Astrocyte of the cerebellum (primary cell): ENCODE measurements at regions of chr1 and their contacts with region 1.

Region 1: DNA sequence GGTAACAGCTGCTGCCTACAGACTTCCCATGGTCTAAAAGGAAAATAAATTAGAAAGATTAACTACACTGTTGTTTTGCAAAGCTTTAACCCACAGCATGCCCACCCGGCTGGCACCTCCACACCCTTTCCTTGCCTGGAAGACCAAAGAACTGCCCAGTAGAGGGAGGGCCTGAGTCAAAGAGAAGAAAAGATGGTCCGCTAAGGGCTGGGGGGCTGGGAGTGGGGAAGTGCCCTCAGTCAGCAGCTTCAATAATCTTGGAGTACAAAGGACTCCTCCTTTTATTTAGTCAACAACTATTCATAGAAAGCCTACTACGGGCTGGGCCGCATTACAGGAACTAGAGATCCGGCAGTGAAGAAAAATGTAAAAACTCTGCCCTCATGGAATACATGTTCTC is 40.6 kb downstream of the ERI3 start:
- DNase-seq: no peak
- H3K4me3 ChIP-seq: no peak overlapping the region
- CTCF ChIP-seq: peak; percentile 37

Region 2: DNA sequence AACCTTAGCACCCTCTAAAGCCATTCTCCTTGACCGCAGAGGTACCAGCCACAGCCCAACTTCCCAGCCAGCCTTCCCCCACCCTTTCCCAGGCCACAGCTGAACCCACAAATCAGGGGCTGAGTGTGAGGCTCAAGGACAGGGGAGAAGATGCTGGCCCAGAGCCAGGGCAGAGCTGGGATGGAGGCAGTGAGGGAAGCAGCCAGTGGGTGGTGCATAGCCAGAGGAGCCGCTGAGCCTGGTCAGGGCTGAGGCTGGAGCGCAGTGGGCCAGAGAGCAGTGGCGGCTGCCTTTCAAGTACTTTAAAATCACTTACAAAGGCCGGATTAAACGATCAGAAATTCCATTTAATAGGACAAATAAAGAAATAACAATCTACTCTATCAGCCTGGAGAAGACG is 64.9 kb before region 1 on chr1:
- in situ Hi-C with region 1: no loop called
- DNase-seq: no peak
- H3K4me3 ChIP-seq: no peak overlapping the region
- CTCF ChIP-seq: no peak

Region 3: GRCh38 chr1:44267438-44267837 is 47.0 kb before region 1 on chr1:
- in situ Hi-C with region 1: loop called (anchors 5 kb)
- DNase-seq: no peak
- H3K4me3 ChIP-seq: no peak overlapping the region
- CTCF ChIP-seq: no peak